CD4-positive, alpha-beta T cell (primary cell): ENCODE measurements at regions of chr18 and their contacts with region 1.

Region 1: DNA sequence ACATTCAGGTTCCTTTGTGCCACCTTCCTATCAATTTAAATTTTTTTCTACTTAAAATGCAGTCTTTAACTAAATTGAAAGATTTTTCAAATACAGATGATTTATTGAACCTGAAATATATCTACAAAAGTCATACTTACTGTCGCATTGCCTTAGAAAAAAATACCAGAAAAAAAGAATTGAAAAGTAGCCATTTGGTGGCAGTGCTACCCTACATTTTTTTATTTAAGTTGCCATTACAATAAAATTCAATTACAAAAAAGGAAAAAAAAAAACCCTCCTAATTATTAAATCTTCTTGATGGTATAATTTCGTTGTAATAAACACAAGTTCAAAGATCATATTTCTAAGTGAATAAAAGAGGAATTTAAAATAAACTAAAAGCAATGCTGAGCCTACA is 43.4 kb downstream of the DSC3 start:
- DNase-seq: no peak
- ATAC-seq: no peak
- H3K4me3 ChIP-seq: no peak overlapping the region
- H3K4me3 Mint-ChIP-seq: no peak overlapping the region
- H3K27ac ChIP-seq: no peak overlapping the region
- H3K27ac Mint-ChIP-seq: no peak overlapping the region
- H3K4me1 ChIP-seq: no peaks in the 10 kb centered on the region
- H3K4me1 Mint-ChIP-seq: no peaks in the 10 kb centered on the region
- H3K27me3 ChIP-seq: no peaks in the 10 kb centered on the region
- H3K27me3 Mint-ChIP-seq: no peaks in the 10 kb centered on the region
- CTCF ChIP-seq: peak; percentile 10

Region 2: DNA sequence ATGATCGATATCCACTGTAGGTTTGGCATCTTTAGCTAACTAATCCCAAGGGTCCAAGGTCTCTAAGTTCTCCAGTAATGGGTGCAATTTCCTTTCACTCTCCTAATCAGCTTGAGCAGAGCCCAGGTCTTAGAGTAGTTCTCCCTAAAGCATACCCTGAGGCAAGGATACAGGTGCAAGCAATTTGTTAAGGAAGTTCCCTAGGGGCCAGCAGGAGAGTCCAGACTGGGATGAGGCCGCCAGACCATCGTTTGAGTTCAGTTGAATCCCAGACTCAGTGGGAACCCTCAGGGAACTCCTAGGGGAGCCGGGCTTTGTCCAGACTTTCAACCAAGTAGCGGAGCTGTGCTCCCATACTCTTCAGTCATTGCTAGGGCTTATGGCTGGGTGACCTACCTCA is 1986.8 kb before region 1 on chr18:
- CTCF ChIA-PET with region 1: no interaction called
- POLR2A ChIA-PET with region 1: no interaction called
- intact Hi-C with region 1: no loop called
- DNase-seq: no peak
- ATAC-seq: no peak
- H3K4me3 ChIP-seq: no peak overlapping the region
- H3K4me3 Mint-ChIP-seq: no peak overlapping the region
- H3K27ac ChIP-seq: no peak overlapping the region
- H3K27ac Mint-ChIP-seq: no peak overlapping the region
- H3K4me1 ChIP-seq: no peaks in the 10 kb centered on the region
- H3K4me1 Mint-ChIP-seq: no peaks in the 10 kb centered on the region
- H3K27me3 ChIP-seq: no peaks in the 10 kb centered on the region
- H3K27me3 Mint-ChIP-seq: no peaks in the 10 kb centered on the region
- CTCF ChIP-seq: no peak

Region 3: DNA sequence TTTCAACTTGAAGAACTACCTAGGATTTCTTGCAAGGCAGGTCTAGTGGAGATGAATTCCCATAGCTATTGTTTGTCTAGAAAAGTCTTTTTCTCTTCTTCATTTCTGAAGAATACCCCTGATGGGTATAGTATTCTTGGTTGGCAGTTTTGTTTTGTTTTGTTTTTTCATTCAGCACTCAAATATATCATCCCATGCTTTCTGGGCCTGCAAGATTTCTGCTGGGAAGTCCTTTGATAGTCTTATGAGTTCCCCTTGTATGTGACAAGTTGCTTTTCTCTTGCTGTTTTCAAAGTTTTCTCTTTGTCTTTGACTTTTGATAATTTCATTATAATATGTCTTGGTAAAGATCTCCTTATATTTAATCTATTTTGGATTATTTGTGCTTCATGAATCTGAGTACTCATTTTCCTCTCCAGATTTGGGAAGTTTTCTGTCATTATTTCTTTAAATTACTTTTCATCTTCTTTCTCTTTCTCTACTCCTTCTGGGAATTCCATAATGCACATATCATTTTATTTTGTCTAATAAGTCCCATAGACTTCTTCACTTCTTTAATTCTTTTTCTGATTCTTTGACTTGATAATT is 58.1 kb before region 1 on chr18:
- CTCF ChIA-PET with region 1: no interaction called
- POLR2A ChIA-PET with region 1: no interaction called
- intact Hi-C with region 1: no loop called
- DNase-seq: no peak
- ATAC-seq: no peak
- H3K4me3 ChIP-seq: no peak overlapping the region
- H3K4me3 Mint-ChIP-seq: no peak overlapping the region
- H3K27ac ChIP-seq: no peak overlapping the region
- H3K27ac Mint-ChIP-seq: no peak overlapping the region
- H3K4me1 ChIP-seq: no peaks in the 10 kb centered on the region
- H3K4me1 Mint-ChIP-seq: no peaks in the 10 kb centered on the region
- H3K27me3 ChIP-seq: no peaks in the 10 kb centered on the region
- H3K27me3 Mint-ChIP-seq: no peaks in the 10 kb centered on the region
- CTCF ChIP-seq: no peak

Region 4: GRCh38 chr18:31030574-31031278 is 31.5 kb after region 1 on chr18:
- CTCF ChIA-PET with region 1: no interaction called
- POLR2A ChIA-PET with region 1: no interaction called
- intact Hi-C with region 1: no loop called
- DNase-seq: no peak
- ATAC-seq: no peak
- H3K4me3 ChIP-seq: no peak overlapping the region
- H3K4me3 Mint-ChIP-seq: no peak overlapping the region
- H3K27ac ChIP-seq: no peak overlapping the region
- H3K27ac Mint-ChIP-seq: no peak overlapping the region
- H3K4me1 ChIP-seq: no peaks in the 10 kb centered on the region
- H3K4me1 Mint-ChIP-seq: no peaks in the 10 kb centered on the region
- H3K27me3 ChIP-seq: no peaks in the 10 kb centered on the region
- H3K27me3 Mint-ChIP-seq: no peaks in the 10 kb centered on the region
- CTCF ChIP-seq: no peak

Region 5: DNA sequence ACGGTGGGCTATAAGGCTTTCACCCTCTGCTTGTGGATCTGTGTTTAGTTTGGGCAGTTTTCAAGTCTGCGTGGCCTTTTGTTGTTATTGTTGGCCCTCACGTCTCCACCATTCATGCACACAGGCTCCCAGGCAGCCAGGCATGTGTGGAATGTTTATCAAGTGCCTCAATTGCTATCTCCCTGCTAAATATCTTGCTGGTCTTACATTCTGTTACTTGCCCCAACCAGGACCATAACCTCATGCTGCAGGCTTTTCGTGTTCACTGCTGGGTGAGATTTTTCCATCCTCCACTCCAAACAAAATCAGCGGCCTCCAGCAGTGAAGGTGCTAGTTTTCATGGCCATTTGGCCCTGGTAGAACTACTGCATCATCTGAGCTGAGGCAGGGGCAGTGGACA is 226.5 kb after region 1 on chr18:
- CTCF ChIA-PET with region 1: no interaction called
- POLR2A ChIA-PET with region 1: no interaction called
- intact Hi-C with region 1: no loop called
- DNase-seq: no peak
- ATAC-seq: no peak
- H3K4me3 ChIP-seq: no peak overlapping the region
- H3K4me3 Mint-ChIP-seq: no peak overlapping the region
- H3K27ac ChIP-seq: no peak overlapping the region
- H3K27ac Mint-ChIP-seq: no peak overlapping the region
- H3K4me1 ChIP-seq: no peaks in the 10 kb centered on the region
- H3K4me1 Mint-ChIP-seq: no peaks in the 10 kb centered on the region
- H3K27me3 ChIP-seq: no peaks in the 10 kb centered on the region
- H3K27me3 Mint-ChIP-seq: no peaks in the 10 kb centered on the region
- CTCF ChIP-seq: no peak

Region 6: GRCh38 chr18:31722369-31722957 is 723.3 kb after region 1 on chr18:
- CTCF ChIA-PET with region 1: no interaction called
- POLR2A ChIA-PET with region 1: no interaction called
- intact Hi-C with region 1: loop called in 1 of 2 experiments (anchors 10 kb)
- DNase-seq: peak; percentile 43 to 81 (median 58)
- ATAC-seq: peak; percentile 78
- H3K4me3 ChIP-seq: no peak overlapping the region
- H3K4me3 Mint-ChIP-seq: peak overlapping the region; percentile 64
- H3K27ac ChIP-seq: no peak overlapping the region
- H3K27ac Mint-ChIP-seq: no peak overlapping the region
- H3K4me1 ChIP-seq: peaks cover 5% of the 10 kb centered on the region
- H3K4me1 Mint-ChIP-seq: peaks cover 7% of the 10 kb centered on the region
- H3K27me3 ChIP-seq: peaks cover 13 to 24% of the 10 kb centered on the region in 2 experiments
- H3K27me3 Mint-ChIP-seq: peaks cover 37% of the 10 kb centered on the region
- CTCF ChIP-seq: peak; percentile 78